Ovary (tissue), 10 donors: ENCODE measurements at regions of chr11 and their contacts with region 1.

Region 1: GRCh38 chr11:93895106-93895862 is 44.9 kb upstream of the VSTM5 start:
- DNase-seq: peak in 2 of 5 donors; percentile 22 to 39
- H3K4me3 ChIP-seq: no peak overlapping the region
- H3K27ac ChIP-seq: no peak overlapping the region
- H3K4me1 ChIP-seq: no peaks in the 10 kb centered on the region
- H3K27me3 ChIP-seq: no peaks in the 10 kb centered on the region
- CTCF ChIP-seq: peak; percentile 50 to 74 (median 51)
- EP300 ChIP-seq: no peak
- POLR2A ChIP-seq: no peak

Region 2: DNA sequence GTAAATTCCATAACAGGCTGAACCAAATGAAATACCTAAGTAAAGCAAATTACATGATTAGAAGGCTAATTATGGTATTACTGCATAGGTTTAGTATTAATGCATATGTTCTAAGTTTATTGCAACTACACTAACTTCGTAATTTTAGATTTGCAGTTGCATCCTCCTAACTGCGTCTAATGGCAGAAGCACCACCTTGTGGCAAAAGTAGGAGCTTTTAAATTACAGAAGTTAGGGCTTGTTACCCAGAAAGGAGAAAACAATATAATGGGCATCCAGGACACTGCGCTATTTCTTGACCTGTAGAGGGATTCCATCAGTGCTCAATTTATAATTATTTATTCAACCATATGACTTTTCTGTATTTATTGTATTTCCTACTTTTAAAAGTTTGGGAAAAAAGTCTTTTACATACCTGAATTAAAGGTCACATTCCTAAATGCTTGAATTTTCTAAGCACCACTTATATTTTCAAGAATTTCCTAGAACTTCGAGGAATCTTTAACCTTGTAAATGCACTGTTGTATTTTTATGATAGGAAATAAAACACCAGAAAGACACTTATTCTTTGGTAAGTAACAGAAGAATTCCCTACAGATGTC is 522.2 kb after region 1 on chr11:
- intact Hi-C with region 1: loop called in 2 of 4 experiments (anchors 5 to 10 kb)
- DNase-seq: peak in 1 of 5 donors; percentile 24
- H3K4me3 ChIP-seq: no peak overlapping the region
- H3K27ac ChIP-seq: no peak overlapping the region
- H3K4me1 ChIP-seq: no peaks in the 10 kb centered on the region
- H3K27me3 ChIP-seq: no peaks in the 10 kb centered on the region
- CTCF ChIP-seq: peak; percentile 19 to 51 (median 43)
- EP300 ChIP-seq: no peak
- POLR2A ChIP-seq: no peak

Region 3: GRCh38 chr11:94493281-94494125 is 598.2 kb after region 1 on chr11 and contains the starts of genes ANKRD49 and MRE11:
- intact Hi-C with region 1: loop called in 1 of 4 experiments (anchors 10 kb)
- DNase-seq: peak; percentile 94 to 98 (median 97)
- H3K4me3 ChIP-seq: peak within 1 kb of the TSS; percentile 92
- H3K27ac ChIP-seq: peak within 1 kb of the TSS; percentile 22 to 76
- H3K4me1 ChIP-seq: peaks cover 1% of the 10 kb centered on the region
- H3K27me3 ChIP-seq: no peaks in the 10 kb centered on the region
- CTCF ChIP-seq: no peak
- EP300 ChIP-seq: no peak
- POLR2A ChIP-seq: peak; percentile 63
- total RNA-seq, gene ANKRD49: 12.9 to 15.3 (median 15.0) TPM
- total RNA-seq, gene MRE11: 14.2 to 23.5 (median 20.1) TPM

Region 4: DNA sequence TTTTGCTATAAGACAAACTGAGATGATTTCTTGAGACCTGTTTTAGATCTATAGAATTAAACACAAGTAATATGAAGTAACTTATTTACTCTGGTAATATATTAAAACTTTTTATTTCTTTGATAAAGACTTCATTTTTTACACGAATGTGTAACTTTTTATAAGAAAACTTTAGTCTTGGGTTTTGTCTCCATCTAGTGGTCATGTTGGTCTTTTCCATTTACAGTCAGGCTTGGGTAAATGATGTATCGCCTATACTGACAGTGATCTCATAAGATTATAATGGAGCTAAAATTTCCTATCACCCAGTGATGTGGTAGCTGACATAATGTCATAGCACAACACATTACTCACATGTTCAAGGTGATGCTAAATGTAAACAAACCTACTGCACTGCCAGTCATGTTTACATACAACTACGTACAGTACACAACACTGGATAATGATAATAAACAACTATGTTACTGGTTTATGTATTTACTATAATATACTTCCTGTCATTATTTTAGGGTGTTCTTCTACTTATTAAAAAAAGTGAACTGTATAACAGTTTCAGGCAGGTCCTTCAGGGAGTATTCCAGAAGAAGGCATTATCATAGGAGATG is 609.5 kb after region 1 on chr11:
- intact Hi-C with region 1: loop called in 3 of 4 experiments (anchors 10 kb)
- DNase-seq: no peak
- H3K4me3 ChIP-seq: no peak overlapping the region
- H3K27ac ChIP-seq: no peak overlapping the region
- H3K4me1 ChIP-seq: no peaks in the 10 kb centered on the region
- H3K27me3 ChIP-seq: no peaks in the 10 kb centered on the region
- CTCF ChIP-seq: peak; percentile 51 to 64 (median 62)
- EP300 ChIP-seq: no peak
- POLR2A ChIP-seq: no peak